AG04450 (cell line): ENCODE measurements at regions of chr7 and their contacts with region 1.

Region 1: DNA sequence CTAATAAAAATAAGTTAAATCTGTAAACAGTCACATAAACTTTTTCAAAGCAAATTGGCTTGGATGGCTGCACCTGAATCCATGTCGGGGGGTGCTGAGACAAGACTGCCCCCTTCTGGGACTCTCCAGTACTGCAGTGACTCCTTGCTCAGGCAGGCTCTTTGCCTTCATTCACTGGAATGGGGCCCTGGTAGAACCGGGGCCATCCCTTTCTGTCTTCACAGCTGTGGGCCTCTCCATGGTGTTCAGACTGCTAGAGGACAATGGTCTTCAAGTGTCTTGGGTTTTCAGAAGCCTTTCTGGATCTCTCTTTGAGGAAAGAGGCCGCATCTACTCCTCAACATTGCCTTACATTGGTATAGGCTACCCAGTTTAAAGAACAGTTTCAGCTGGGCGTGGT is 16.1 kb upstream of the IMPDH1 start:
- DNase-seq: peak; percentile 16
- H3K4me3 ChIP-seq: no peak overlapping the region
- H3K27ac ChIP-seq: no peak overlapping the region
- H3K27me3 ChIP-seq: no peaks in the 10 kb centered on the region
- CTCF ChIP-seq: peak; percentile 97

Region 2: DNA sequence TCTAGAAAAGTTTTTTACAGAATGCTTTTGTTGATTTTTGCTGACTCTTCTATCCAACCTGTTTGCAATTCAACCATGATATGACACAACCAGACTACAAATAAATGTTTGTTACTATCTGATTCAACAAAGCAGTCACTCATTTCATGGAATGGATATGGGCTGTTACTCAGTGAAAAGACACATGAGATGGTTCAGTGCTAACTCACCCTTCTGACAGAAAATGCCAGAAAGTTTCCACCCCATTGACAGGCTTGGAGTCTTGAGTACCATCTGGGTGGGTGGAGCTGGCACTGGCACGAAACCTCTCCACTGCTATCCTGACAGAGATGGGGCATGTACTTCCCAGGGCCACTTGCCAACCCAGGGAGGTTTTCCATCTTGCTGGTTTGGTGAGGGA is 121.6 kb before region 1 on chr7:
- CTCF ChIA-PET with region 1: no interaction called
- POLR2A ChIA-PET with region 1: no interaction called
- DNase-seq: no peak
- H3K4me3 ChIP-seq: no peak overlapping the region
- H3K27ac ChIP-seq: no peak overlapping the region
- H3K27me3 ChIP-seq: no peaks in the 10 kb centered on the region
- CTCF ChIP-seq: no peak

Region 3: GRCh38 chr7:128343554-128344430 is 82.1 kb before region 1 on chr7 and contains the start of gene RBM28:
- CTCF ChIA-PET with region 1: interaction called, 59 read pairs
- POLR2A ChIA-PET with region 1: no interaction called
- DNase-seq: peak; percentile 78
- H3K4me3 ChIP-seq: peak within 1 kb of the TSS; percentile 87
- H3K27ac ChIP-seq: peak within 1 kb of the TSS; percentile 92
- H3K27me3 ChIP-seq: peaks cover 11% of the 10 kb centered on the region
- CTCF ChIP-seq: no peak
- polyA plus RNA-seq, gene RBM28: 18.8 and 19.0 TPM in 2 replicates

Region 4: GRCh38 chr7:128398016-128398840 is 27.6 kb before region 1 on chr7:
- CTCF ChIA-PET with region 1: interaction called, 88 read pairs
- POLR2A ChIA-PET with region 1: no interaction called
- DNase-seq: no peak
- H3K4me3 ChIP-seq: no peak overlapping the region
- H3K27ac ChIP-seq: no peak overlapping the region
- H3K27me3 ChIP-seq: no peaks in the 10 kb centered on the region
- CTCF ChIP-seq: peak; percentile 96

Region 5: GRCh38 chr7:128437426-128438332 is 11.8 kb after region 1 on chr7:
- CTCF ChIA-PET with region 1: interaction called, 95 read pairs
- POLR2A ChIA-PET with region 1: no interaction called
- DNase-seq: no peak
- H3K4me3 ChIP-seq: no peak overlapping the region
- H3K27ac ChIP-seq: no peak overlapping the region
- H3K27me3 ChIP-seq: peaks cover 12% of the 10 kb centered on the region
- CTCF ChIP-seq: no peak

Region 6: DNA sequence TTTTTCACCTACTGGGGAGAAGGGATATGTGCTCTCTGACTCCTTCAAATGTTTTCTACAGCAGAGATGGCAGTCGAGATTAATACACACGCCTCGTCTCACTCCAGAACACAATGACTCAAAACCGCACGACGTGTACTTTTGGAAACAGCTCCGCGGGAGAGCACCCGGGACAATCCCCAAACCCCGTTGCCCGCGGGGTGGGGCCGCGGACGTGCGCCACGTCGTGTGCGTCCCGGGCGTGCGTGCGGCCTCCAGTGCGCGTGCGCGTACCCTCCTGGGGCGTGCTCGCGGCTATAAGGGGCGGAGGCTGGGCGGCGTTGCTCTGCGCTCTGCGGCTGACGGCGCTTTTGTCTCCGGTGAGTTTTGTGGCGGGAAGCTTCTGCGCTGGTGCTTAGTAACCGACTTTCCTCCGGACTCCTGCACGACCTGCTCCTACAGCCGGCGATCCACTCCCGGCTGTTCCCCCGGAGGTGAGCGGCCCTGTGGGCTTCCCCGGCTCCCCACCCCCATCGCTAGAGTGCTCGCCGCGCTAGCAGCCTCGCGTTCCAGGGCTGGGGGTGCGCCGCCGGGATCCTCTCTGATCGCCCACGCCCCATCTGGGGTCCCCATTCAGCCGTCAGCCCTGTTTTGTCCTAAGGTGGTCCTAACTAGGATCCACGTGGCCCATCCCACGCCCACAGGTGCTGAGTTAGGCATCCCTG is 29.9 kb after region 1 on chr7 and contains the start of gene HILPDA:
- CTCF ChIA-PET with region 1: interaction called, 330 read pairs
- POLR2A ChIA-PET with region 1: interaction called, 8 read pairs
- DNase-seq: peak; percentile 80
- H3K4me3 ChIP-seq: peak within 1 kb of the TSS; percentile 100
- H3K27ac ChIP-seq: peak within 1 kb of the TSS; percentile 97
- H3K27me3 ChIP-seq: peaks cover 4% of the 10 kb centered on the region
- CTCF ChIP-seq: peak; percentile 27; the same call in 1 of the 2 replicates
- polyA plus RNA-seq, gene HILPDA: 15.9 and 17.8 TPM in 2 replicates